Spleen (tissue), 13 donors: ENCODE measurements at regions of chr2 and their contacts with region 1.

Region 1: DNA sequence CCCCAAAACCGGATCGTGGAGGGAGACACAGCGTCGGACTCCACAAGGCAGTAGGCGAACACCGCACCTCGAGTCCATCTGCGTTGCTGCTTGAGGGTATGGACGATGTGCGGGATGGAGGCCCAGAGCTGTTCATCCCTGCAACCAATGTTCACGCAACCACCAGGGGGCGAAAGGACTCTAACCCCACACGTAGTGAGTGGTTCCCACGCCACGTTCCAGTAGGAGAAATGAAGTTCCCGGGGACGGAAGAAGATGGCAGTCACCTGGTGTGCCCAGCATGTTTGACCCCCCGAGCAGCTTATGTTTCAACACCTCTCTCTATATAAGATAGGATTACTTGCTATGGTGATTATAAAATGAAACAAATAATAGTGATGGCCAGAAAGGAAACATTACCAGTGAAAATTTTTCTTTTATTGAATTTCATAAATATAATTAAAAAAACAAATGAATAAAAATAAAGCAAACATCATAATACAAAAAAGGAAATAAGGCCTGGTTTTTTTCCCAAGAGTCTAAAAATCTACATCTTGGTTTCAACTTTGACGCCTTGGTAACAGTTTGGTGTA is 184.3 kb downstream of the SH3BP4 start:
- DNase-seq: no peak
- H3K4me3 ChIP-seq: no peak overlapping the region
- H3K27ac ChIP-seq: no peak overlapping the region
- H3K4me1 ChIP-seq: peaks cover 0 to 13% (median 3%) of the 10 kb centered on the region in 6 donors
- H3K27me3 ChIP-seq: peaks cover 0 to 29% (median 0%) of the 10 kb centered on the region in 7 donors
- CTCF ChIP-seq: peak in 10 of 11 experiments; percentile 24 to 74 (median 56)
- POLR2A ChIP-seq: no peak

Region 2: GRCh38 chr2:235011929-235012631 is 124.0 kb before region 1 on chr2:
- intact Hi-C with region 1: no loop called
- DNase-seq: no peak
- H3K4me3 ChIP-seq: no peak overlapping the region
- H3K27ac ChIP-seq: no peak overlapping the region
- H3K4me1 ChIP-seq: peaks cover 0 to 11% (median 0%) of the 10 kb centered on the region in 6 donors
- H3K27me3 ChIP-seq: no peaks in the 10 kb centered on the region
- CTCF ChIP-seq: no peak
- POLR2A ChIP-seq: no peak

Region 3: DNA sequence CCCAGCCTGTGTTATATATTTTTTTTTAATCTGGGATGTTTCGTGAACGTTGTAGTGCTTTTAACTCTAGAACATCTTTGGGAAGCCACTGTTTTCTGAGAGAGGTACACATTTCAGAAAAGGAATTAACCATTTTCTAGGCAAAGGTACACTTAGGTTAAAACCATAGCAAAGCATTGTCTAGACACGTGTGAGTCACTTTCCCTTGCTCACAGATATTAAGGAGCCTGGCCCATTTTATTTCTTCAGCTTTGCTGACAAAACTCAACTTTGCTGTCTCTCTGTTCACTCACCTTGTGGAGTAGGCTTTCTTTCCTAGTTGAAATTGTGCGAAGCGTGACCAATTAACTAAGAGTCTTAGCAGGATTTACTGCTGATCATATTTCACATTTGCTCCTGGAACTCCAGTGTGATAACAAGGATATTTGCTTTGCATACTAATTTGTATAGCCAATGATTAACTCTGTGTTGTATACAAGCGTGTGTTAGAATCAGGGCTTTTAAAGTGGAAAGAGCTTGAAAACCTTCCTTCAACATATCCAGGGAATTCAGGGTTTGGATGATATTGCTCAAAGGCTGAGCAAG is 142.8 kb after region 1 on chr2:
- intact Hi-C with region 1: no loop called
- DNase-seq: no peak
- H3K4me3 ChIP-seq: no peak overlapping the region
- H3K27ac ChIP-seq: no peak overlapping the region
- H3K4me1 ChIP-seq: no peaks in the 10 kb centered on the region
- H3K27me3 ChIP-seq: peaks cover 0 to under 1% (median 0%) of the 10 kb centered on the region in 7 donors
- CTCF ChIP-seq: no peak
- POLR2A ChIP-seq: no peak

Region 4: GRCh38 chr2:235746257-235747084 is 610.4 kb after region 1 on chr2:
- intact Hi-C with region 1: loop called (anchors 10 kb)
- DNase-seq: no peak
- H3K4me3 ChIP-seq: no peak overlapping the region
- H3K27ac ChIP-seq: no peak overlapping the region
- H3K4me1 ChIP-seq: peaks cover 0 to 8% (median 0%) of the 10 kb centered on the region in 6 donors
- H3K27me3 ChIP-seq: peaks cover 0 to 8% (median 0%) of the 10 kb centered on the region in 7 donors
- CTCF ChIP-seq: peak; percentile 31 to 80 (median 74)
- POLR2A ChIP-seq: no peak